Transverse colon (tissue), 4 donors: ENCODE measurements at regions of chr4 and their contacts with region 1.

Region 1: DNA sequence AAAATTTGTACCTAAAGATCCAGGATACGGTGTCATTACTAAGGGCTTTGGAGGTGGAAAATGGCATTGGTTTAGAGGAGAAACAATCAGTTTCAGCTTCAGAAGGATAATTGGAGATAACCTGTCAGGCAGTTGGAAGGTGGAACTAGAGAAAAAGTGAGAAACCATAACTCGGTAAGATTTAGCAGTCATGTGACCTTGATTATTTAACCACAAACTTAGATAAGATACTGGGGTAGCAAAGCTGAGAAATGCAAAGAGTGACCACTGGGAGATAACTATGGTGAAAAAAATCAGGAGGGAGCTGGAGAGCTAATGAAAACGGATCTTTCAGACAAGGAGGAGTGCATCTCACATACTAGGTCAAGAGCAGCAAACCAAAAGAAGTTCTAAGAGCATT is 58.3 kb upstream of the SMARCA5 start:
- DNase-seq: no peak
- H3K4me3 ChIP-seq: no peak overlapping the region
- H3K27ac ChIP-seq: no peak overlapping the region
- H3K4me1 ChIP-seq: no peaks in the 10 kb centered on the region
- H3K27me3 ChIP-seq: no peaks in the 10 kb centered on the region
- CTCF ChIP-seq: no peak
- EP300 ChIP-seq: no peak
- POLR2A ChIP-seq: no peak

Region 2: GRCh38 chr4:141957416-141957815 is 1497.8 kb before region 1 on chr4:
- in situ Hi-C with region 1: no loop called
- intact Hi-C with region 1: no loop called
- DNase-seq: no peak
- H3K4me3 ChIP-seq: no peak overlapping the region
- H3K27ac ChIP-seq: no peak overlapping the region
- H3K4me1 ChIP-seq: no peaks in the 10 kb centered on the region
- H3K27me3 ChIP-seq: no peaks in the 10 kb centered on the region
- CTCF ChIP-seq: no peak
- EP300 ChIP-seq: no peak
- POLR2A ChIP-seq: no peak

Region 3: DNA sequence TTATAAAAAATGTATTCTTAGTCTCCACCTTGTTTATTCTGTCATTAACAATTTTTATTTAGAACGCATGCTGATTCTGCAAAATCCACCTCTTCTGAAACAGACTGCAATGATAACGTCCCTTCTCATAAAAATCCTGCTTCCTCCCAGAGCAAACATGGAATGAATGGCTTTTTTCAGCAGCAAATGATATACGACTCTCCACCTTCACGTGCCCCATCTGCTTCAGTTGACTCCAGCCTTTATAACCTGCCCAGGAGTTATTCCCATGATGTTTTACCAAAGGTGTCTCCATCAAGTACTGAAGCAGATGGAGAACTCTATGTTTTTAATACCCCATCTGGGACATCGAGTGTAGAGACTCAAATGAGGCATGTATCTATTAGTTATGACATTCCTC is 17.3 kb before region 1 on chr4:
- in situ Hi-C with region 1: no loop called
- intact Hi-C with region 1: loop called (anchors 1 kb)
- DNase-seq: no peak
- H3K4me3 ChIP-seq: no peak overlapping the region
- H3K27ac ChIP-seq: peak overlapping the region in 1 of 4 donors; percentile 8
- H3K4me1 ChIP-seq: peaks cover 0 to 5% (median 0%) of the 10 kb centered on the region in 4 donors
- H3K27me3 ChIP-seq: no peaks in the 10 kb centered on the region
- CTCF ChIP-seq: no peak
- EP300 ChIP-seq: no peak
- POLR2A ChIP-seq: no peak